RWPE1 (cell line): ENCODE measurements at regions of chr5 and their contacts with region 1.

Region 1: DNA sequence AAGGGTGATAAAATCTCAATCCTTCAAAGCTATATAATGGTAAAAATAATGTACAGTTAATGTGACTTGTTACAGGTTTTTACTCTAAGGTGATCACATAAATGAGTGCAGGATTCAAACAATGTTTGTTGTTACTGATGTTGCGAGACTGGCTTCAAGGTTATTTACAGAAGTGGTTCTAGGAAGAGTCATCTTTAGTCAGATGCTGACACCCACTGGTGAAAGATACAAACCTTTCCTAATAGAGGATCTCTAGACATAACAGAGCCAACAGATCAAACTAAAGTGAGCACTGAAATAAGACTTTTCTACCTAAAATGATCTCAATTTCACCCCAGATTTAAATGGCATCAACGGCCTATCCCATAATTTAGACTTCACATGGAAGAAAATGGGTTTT is 20.2 kb downstream of the ARSB start:
- DNase-seq: peak; percentile 51
- H3K27ac ChIP-seq: no peak overlapping the region
- CTCF ChIP-seq: peak; percentile 56

Region 2: DNA sequence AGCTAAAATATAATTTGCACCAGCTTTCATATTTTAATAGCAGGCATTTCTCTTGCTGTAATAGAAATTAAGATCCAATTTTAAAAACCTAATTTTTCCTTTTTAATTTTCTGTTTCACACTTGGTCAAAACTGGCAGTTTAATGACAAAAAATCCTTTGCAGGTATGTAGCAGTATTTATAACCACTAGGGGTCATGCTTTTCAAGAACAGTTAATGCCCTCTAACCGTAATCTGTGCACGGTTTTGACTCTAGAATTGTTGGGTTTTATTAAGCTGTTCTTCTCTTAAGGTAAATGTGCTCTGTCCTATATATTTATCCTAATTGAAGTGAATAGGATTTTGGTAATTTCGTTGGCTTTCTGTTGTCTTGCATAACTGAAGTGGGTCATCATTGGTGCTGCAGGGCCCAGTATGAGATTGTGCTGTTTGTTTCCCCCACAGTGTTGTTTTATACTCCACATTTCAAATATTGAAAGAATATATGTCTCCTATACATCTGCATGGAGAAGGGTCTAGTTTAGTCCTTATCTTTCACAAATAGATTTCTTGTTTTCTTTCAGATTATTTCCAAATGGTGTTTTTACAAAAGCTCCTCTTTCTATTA is 497.0 kb before region 1 on chr5:
- CTCF ChIA-PET with region 1: interaction called, 14 read pairs
- POLR2A ChIA-PET with region 1: no interaction called
- DNase-seq: peak; percentile 46
- H3K27ac ChIP-seq: no peak overlapping the region
- CTCF ChIP-seq: peak; percentile 87